PC-9 (cell line): ENCODE measurements at regions of chr4 and their contacts with region 1.

Region 1: GRCh38 chr4:144355809-144356757 is 215.6 kb upstream of the GYPA start:
- DNase-seq: peak; percentile 50 to 58
- H3K4me3 ChIP-seq: no peak overlapping the region
- H3K27ac ChIP-seq: no peak overlapping the region
- H3K4me1 ChIP-seq: no peaks in the 10 kb centered on the region
- H3K27me3 ChIP-seq: no peaks in the 10 kb centered on the region
- CTCF ChIP-seq: no peak

Region 2: DNA sequence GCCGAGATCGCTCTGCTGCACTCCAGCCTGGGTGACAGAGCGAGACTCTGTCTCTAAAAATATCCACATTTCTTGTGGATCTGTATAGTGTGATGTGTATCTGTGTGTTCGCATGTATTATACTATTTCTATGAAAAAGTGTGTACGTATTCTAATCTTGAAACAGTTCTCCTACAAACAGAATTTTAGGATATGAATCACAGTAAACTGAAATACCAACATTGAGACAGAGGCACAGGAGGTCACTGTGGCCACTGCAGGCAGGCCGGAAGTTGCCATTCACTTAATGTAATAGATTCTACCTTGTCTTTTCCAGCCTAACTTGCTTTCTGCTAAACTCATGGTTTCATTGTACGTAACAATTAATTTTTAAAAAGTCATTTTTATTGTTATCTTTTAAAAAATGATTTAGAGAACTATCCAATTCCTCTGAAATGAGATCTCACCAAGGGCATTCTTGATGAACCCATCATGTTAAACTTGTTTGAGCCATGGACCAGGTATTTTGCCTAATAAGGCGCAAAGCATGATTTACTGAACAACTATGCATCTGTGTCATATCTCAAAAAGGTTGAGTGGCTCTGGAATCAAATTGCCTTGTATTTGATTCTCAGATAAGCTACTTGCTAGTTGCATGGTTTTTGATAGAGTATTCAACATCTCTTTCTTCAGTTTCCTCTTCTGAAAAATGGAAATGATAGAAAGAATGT is 60.6 kb before region 1 on chr4:
- CTCF ChIA-PET with region 1: no interaction called
- POLR2A ChIA-PET with region 1: no interaction called
- intact Hi-C with region 1: loop called (anchors 2 kb)
- DNase-seq: peak; percentile 6 to 36
- H3K4me3 ChIP-seq: no peak overlapping the region
- H3K27ac ChIP-seq: no peak overlapping the region
- H3K4me1 ChIP-seq: no peaks in the 10 kb centered on the region
- H3K27me3 ChIP-seq: no peaks in the 10 kb centered on the region
- CTCF ChIP-seq: no peak

Region 3: DNA sequence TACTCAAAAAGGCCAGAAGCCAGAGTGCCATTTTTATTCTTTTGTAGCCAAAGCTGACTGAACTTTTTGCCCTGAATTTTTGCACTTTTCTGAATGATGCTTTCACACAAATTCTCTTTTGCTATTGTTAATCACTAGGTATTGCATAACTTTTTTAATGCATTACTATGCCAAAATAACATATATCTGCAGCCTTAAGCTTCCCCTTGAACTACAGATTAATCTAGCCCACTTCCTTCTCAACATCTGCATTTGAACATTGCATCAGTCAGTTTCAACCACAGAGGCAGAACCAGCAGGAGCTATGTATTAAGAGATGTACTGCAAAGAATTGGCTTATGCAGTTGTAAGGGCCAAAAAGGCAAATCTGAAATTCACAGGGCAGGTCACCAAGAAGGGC is 17.9 kb before region 1 on chr4:
- CTCF ChIA-PET with region 1: no interaction called
- POLR2A ChIA-PET with region 1: no interaction called
- intact Hi-C with region 1: loop called (anchors 1 kb)
- DNase-seq: no peak
- H3K4me3 ChIP-seq: no peak overlapping the region
- H3K27ac ChIP-seq: peak overlapping the region; percentile 74
- H3K4me1 ChIP-seq: peaks cover 6% of the 10 kb centered on the region; the same call in 1 of the 2 replicates
- H3K27me3 ChIP-seq: no peaks in the 10 kb centered on the region
- CTCF ChIP-seq: no peak

Region 4: GRCh38 chr4:144374043-144374442 is 18.0 kb after region 1 on chr4:
- CTCF ChIA-PET with region 1: no interaction called
- POLR2A ChIA-PET with region 1: no interaction called
- intact Hi-C with region 1: no loop called
- DNase-seq: no peak
- H3K4me3 ChIP-seq: no peak overlapping the region
- H3K27ac ChIP-seq: no peak overlapping the region
- H3K4me1 ChIP-seq: no peaks in the 10 kb centered on the region
- H3K27me3 ChIP-seq: no peaks in the 10 kb centered on the region
- CTCF ChIP-seq: no peak

Region 5: DNA sequence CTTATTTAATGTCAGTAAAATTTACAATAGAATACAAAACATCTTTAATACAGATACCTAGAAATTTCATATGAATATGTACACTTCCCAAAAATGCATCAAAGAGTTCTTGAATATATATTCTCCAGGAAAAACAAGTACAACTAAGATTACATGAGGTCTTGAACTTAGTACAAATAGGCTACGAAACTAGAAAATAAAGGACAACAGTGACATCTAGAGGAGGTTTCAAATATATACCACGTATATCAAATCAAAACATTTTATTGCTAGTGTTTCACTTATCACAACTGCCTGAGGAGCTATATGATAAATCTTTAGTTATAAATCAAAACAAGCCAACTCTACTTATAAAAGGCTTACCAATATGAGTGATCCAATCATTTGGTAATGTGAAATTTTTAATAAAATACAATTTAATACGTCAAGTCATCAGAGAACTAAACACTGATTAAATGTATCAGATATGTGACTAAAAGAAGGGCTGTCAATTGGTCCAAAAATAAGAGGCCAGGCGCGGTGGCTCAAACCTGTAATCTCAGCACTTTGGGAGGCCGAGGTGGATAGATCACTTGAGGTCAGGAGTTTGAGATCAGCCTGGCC is 705.3 kb after region 1 on chr4:
- CTCF ChIA-PET with region 1: no interaction called
- POLR2A ChIA-PET with region 1: no interaction called
- intact Hi-C with region 1: loop called (anchors 10 kb)
- DNase-seq: no peak
- H3K4me3 ChIP-seq: no peak overlapping the region
- H3K27ac ChIP-seq: no peak overlapping the region
- H3K4me1 ChIP-seq: peaks cover 5% of the 10 kb centered on the region; the same call in 1 of the 2 replicates
- H3K27me3 ChIP-seq: no peaks in the 10 kb centered on the region
- CTCF ChIP-seq: peak; percentile 66